ENCODE measurements at regions of chr7 and their contacts with region 1.

Region 1: DNA sequence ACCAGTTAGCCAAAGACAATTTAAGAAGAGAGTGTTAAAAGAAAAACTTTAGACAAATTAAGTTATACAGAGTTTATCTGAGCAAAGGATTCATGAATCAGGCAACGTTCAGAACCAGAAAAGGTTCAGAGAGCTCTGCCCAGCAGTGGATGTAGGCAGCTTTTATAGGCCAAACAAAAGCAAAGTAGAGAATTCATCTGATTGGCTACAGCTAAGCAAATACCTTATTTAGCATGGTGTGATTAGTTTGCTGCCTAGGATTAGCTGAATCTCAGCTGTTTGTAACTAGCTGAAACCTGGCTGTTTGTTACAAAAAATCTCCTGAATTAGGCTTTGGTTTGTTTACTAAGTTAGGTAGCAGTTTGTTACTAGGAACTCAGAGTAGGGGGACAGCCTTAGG is 66.0 kb downstream of the SLC25A40 start:
- DNase-seq: no peak
- CTCF ChIP-seq: no peak

Region 2: DNA sequence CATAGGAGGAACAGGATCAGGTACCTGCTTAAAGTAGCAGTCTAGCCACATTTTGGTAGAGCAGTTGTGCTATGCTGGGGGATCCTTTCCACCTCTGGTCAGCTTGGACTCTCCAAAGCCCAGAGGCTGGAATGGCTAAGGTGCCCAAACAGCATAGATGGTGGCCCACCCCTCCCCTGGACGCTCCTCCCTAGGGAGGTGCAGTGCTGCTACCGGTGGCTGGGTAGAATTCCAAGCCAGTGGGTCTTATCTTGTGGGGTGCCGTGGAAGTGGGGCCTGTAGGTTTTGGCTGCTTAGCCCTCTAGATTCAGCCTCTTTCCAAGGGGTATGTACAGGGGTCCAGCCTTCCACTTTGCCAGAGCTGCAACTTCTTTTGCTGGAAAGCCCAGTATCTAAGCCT is 137.9 kb before region 1 on chr7:
- CTCF ChIA-PET with region 1: no interaction called
- POLR2A ChIA-PET with region 1: no interaction called
- DNase-seq: no peak
- CTCF ChIP-seq: no peak

Region 3: GRCh38 chr7:87797798-87798403 is 12.2 kb before region 1 on chr7:
- CTCF ChIA-PET with region 1: interaction called, 10 read pairs
- POLR2A ChIA-PET with region 1: no interaction called
- DNase-seq: peak; percentile 47
- CTCF ChIP-seq: peak; percentile 65